Mammary epithelial cell (primary cell): ENCODE measurements at regions of chr6 and their contacts with region 1.

Region 1: DNA sequence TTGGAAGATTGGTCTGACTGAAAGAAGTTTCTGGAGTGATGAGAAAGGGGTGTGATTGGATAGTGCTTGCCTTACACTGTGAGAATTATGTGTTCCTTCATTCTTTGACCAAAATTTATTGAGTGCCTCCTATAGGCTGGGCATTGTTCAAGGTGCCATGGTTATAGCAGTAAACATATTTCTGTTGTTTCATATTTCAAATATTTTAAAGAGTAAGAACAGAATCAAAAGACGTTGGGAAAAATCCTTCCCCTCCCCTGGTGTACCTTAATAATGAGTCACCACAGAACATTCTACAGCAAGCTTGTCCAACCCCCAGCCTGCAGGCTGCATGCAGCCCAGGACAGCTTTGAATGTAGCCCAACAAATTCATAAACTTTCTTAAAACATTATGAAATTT is 78.6 kb downstream of the GCLC start:
- DNase-seq: peak; percentile 58
- H3K4me3 ChIP-seq: no peak overlapping the region
- H3K27ac ChIP-seq: peak overlapping the region; percentile 78
- H3K4me1 ChIP-seq: peaks cover 26% of the 10 kb centered on the region
- H3K27me3 ChIP-seq: no peaks in the 10 kb centered on the region
- CTCF ChIP-seq: no peak

Region 2: GRCh38 chr6:53446151-53446550 is 20.1 kb before region 1 on chr6:
- CTCF ChIA-PET with region 1: no interaction called
- dilution Hi-C with region 1: no loop called
- in situ Hi-C with region 1: no loop called
- intact Hi-C with region 1: loop called (anchors 1 kb)
- DNase-seq: no peak
- H3K4me3 ChIP-seq: no peak overlapping the region
- H3K27ac ChIP-seq: no peak overlapping the region
- H3K4me1 ChIP-seq: no peaks in the 10 kb centered on the region
- H3K27me3 ChIP-seq: no peaks in the 10 kb centered on the region
- CTCF ChIP-seq: no peak

Region 3: DNA sequence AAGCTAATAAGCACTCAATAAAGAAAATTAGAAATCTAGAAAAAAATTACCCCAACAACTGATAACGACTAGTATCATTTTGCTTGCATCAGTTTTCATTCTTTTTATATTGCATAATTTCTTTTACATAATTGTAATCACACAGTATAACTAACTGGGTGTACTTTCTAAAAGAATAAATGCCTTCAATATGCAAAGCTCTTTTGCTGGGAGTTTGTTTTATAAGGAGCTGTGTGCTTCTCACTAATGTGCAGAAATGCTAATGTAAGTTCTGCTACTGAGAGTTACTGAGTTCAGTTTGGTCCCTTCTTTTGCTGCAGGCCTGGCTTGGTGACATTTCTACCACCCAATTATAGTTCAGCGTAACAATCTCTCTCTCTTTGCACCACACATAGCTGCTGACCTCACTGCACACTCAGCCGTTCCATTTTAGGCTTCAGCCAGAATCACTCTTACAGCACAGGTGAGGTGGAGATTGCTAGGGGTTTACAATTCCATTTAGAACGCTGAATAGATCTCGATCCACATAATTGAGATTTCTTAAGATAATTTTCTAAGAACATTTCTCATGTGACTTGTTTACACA is 220.2 kb after region 1 on chr6:
- CTCF ChIA-PET with region 1: no interaction called
- dilution Hi-C with region 1: no loop called
- in situ Hi-C with region 1: no loop called
- intact Hi-C with region 1: no loop called
- DNase-seq: no peak
- H3K4me3 ChIP-seq: no peak overlapping the region
- H3K27ac ChIP-seq: no peak overlapping the region
- H3K4me1 ChIP-seq: peaks cover 4% of the 10 kb centered on the region
- H3K27me3 ChIP-seq: no peaks in the 10 kb centered on the region
- CTCF ChIP-seq: no peak